Cardiac septum (tissue), 1 donor: ENCODE measurements at regions of chr1 and their contacts with region 1.

Region 1: GRCh38 chr1:153677718-153678505 is 576 bp upstream of the NPR1 start:
- DNase-seq: no peak

Region 2: GRCh38 chr1:153545067-153546055 is 132.6 kb before region 1 on chr1 and contains the start of gene S100A4:
- intact Hi-C with region 1: no loop called
- DNase-seq: peak; percentile 98
- total RNA-seq, gene S100A4: 107 TPM

Region 3: GRCh38 chr1:153698020-153698931 is 20.4 kb after region 1 on chr1:
- intact Hi-C with region 1: loop called (anchors 2 kb)
- DNase-seq: peak; percentile 89

Region 4: GRCh38 chr1:153749408-153750005 is 71.6 kb after region 1 on chr1:
- intact Hi-C with region 1: loop called (anchors 1 kb)
- DNase-seq: peak; percentile 93

Region 5: DNA sequence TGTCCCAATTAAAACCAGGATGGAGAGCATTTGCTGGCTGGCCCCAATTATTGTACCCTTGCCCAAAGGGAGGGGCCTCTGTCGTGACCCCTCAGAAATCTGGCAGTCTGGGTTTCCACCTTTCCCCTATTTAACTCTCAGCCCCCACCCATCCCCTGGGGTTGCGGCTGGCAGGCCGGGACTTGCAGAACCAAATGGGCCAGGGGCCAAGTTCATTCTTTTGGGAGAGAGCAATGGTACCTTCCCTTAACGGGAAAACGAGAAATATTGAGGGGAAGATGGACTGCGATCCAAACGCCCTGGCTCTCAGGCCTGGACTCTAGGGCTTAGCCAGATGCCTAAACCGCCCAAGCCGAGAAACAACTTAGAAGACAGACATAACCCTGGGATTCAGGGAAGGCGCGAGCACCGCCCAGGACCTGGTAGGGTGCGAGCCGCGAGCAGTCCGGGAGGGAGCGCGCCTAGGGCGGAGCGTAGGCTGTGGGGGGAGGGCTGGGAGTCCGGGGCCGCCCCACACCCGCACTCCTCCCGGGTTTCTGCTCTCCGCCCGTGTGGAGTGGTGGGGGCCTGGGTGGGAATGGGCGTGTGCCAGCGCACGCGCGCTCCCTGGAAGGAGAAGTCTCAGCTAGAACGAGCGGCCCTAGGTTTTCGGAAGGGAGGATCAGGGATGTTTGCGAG is 97.0 kb after region 1 on chr1 and contains the start of gene SLC27A3:
- intact Hi-C with region 1: loop called (anchors 2 kb)
- DNase-seq: peak; percentile 90
- total RNA-seq, gene SLC27A3: 9.8 TPM